Heart right ventricle (tissue), 16 donors: ENCODE measurements at regions of chr6 and their contacts with region 1.

Region 1: GRCh38 chr6:31493875-31494694 is 3.9 kb upstream of the MICB start:
- DNase-seq: peak; percentile 79 to 84
- ATAC-seq: peak; percentile 79 to 92 (median 86)
- H3K4me3 ChIP-seq: peak overlapping the region; percentile 46 to 94 (median 71)
- H3K27ac ChIP-seq: peak overlapping the region; percentile 16 to 89 (median 78)
- H3K4me1 ChIP-seq: peaks cover 0 to 53% (median 33%) of the 10 kb centered on the region in 9 donors
- H3K27me3 ChIP-seq: peaks cover 0 to 30% (median 5%) of the 10 kb centered on the region in 7 donors
- CTCF ChIP-seq: peak; percentile 52 to 92 (median 81)

Region 2: DNA sequence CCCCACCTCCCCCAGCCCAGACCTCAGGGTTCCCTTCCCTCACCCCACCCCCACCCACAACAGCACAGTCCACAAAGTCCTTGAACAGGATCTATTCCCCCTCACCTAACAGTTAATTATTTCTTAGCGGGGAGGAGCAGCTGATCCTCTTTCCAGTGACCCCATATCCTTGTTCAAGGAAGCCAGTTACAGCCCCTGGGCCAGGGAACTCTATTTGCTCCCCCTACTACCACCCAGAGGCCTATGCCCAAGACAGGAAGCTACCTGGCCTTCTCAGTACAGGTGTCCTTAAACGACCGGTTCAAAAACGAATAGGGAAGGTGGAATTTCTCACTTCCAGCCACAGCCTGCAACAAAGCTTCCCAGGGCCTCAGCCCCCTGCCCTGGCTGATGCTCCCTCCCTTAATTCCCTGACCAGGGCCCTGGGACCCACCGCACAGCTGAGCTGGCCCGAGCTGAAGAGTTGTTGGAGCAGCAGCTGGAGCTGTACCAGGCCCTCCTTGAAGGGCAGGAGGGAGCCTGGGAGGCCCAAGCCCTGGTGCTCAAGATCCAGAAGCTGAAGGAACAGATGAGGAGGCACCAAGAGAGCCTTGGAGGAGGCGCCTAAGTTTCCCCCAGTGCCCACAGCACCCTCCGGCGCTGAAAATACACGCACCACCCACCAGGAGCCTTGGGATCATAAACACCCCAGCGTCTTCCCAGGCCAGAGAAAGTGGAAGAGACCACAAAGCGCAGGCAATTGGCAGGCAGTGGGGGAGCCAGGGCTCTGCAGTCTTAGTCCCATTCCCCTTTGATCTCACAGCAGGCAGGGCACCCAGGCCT is 35.5 kb after region 1 on chr6:
- intact Hi-C with region 1: loop called in 1 of 10 experiments (anchors 5 kb)
- DNase-seq: no peak
- ATAC-seq: peak in 4 of 8 donors; percentile 6 to 23 (median 8)
- H3K4me3 ChIP-seq: no peak overlapping the region
- H3K27ac ChIP-seq: no peak overlapping the region
- H3K4me1 ChIP-seq: peaks cover 0 to 23% (median 3%) of the 10 kb centered on the region in 9 donors
- H3K27me3 ChIP-seq: no peaks in the 10 kb centered on the region
- CTCF ChIP-seq: no peak

Region 3: DNA sequence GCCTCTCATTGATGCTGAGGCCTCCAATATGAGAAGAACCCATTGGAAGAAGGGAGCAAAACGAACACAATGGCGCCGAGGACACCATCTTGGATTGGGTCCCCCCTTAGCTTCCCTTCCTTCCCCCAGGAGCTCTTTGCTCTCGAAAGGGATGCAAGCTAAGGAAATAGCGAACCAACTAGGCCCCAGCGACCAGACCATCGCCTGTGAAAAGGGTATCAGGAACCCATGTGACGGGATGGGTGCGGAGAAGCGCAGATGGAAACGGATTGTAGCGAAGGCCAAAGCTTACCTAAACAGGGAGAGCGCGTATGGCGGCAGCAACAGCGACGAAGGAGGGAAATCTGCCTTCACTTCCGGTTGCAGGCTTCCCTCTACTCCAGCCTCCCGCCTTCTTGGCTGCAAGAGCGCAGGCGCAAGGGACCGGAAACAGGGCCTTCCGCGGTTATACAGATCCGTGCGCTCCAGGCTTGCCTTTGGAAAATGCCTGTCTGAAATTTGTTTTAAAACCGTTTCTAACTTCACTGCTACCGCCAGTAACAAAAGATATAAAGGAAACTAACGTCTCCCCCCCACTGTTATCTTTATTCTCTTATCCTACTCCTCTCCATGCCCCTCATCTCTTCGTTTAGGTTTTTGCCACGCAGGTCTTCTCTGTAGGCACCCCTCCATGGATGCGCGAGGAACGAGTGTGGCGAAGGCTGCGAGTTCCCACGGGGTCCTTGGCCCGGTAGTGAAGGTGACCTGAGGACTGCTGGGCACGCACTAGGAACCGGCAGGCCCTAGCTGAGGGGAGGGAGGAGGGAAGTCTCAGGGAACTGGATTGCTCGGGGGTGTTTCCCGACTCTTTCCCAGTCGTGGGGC is 47.8 kb after region 1 on chr6 and contains the start of gene DDX39B:
- intact Hi-C with region 1: loop called in 6 of 10 experiments (anchors 2 to 5 kb)
- DNase-seq: peak; percentile 93 to 96
- ATAC-seq: peak; percentile 93 to 96 (median 94)
- H3K4me3 ChIP-seq: peak within 1 kb of the TSS; percentile 42 to 87 (median 73)
- H3K27ac ChIP-seq: peak within 1 kb of the TSS; percentile 81 to 100 (median 93)
- H3K4me1 ChIP-seq: peaks cover 22 to 55% (median 41%) of the 10 kb centered on the region in 9 donors
- H3K27me3 ChIP-seq: no peaks in the 10 kb centered on the region
- CTCF ChIP-seq: no peak
- total RNA-seq, gene DDX39B: 154 to 193 (median 172) TPM

Region 4: GRCh38 chr6:31597006-31597405 is 102.9 kb after region 1 on chr6:
- intact Hi-C with region 1: loop called in 5 of 10 experiments (anchors 1 to 5 kb)
- DNase-seq: no peak
- ATAC-seq: peak in 6 of 8 donors; percentile 43 to 71 (median 60)
- H3K4me3 ChIP-seq: no peak overlapping the region
- H3K27ac ChIP-seq: no peak overlapping the region
- H3K4me1 ChIP-seq: peaks cover 0 to 10% (median 0%) of the 10 kb centered on the region in 9 donors
- H3K27me3 ChIP-seq: no peaks in the 10 kb centered on the region
- CTCF ChIP-seq: peak in 7 of 9 donors; percentile 26 to 53 (median 46)

Region 5: GRCh38 chr6:31652925-31653718 is 159.0 kb after region 1 on chr6:
- intact Hi-C with region 1: no loop called
- DNase-seq: peak; percentile 76 to 94
- ATAC-seq: peak; percentile 69 to 86 (median 82)
- H3K4me3 ChIP-seq: peak overlapping the region; percentile 51 to 93 (median 76)
- H3K27ac ChIP-seq: peak overlapping the region; percentile 85 to 100 (median 98)
- H3K4me1 ChIP-seq: peaks cover 0 to 45% (median 36%) of the 10 kb centered on the region in 9 donors
- H3K27me3 ChIP-seq: no peaks in the 10 kb centered on the region
- CTCF ChIP-seq: peak in 3 of 9 donors; percentile 14 to 29 (median 19)